Activated naive CD8-positive, alpha-beta T cell treated with anti-CD3 and anti-CD28 coated beads, Interleukin-2, amount 10 ng/mL, durations not matched to agents 7 days and 5 days (primary cell): ENCODE measurements at regions of chr10 and their contacts with region 1.

Region 1: GRCh38 chr10:5293691-5294550 is 70.8 kb upstream of the UCN3 start:
- DNase-seq: peak; percentile 80
- ATAC-seq: peak; percentile 56
- H3K4me3 Mint-ChIP-seq: peak overlapping the region; percentile 97
- H3K27ac Mint-ChIP-seq: peak overlapping the region; percentile 98
- H3K4me1 Mint-ChIP-seq: peaks cover 66% of the 10 kb centered on the region
- H3K27me3 Mint-ChIP-seq: no peaks in the 10 kb centered on the region

Region 2: DNA sequence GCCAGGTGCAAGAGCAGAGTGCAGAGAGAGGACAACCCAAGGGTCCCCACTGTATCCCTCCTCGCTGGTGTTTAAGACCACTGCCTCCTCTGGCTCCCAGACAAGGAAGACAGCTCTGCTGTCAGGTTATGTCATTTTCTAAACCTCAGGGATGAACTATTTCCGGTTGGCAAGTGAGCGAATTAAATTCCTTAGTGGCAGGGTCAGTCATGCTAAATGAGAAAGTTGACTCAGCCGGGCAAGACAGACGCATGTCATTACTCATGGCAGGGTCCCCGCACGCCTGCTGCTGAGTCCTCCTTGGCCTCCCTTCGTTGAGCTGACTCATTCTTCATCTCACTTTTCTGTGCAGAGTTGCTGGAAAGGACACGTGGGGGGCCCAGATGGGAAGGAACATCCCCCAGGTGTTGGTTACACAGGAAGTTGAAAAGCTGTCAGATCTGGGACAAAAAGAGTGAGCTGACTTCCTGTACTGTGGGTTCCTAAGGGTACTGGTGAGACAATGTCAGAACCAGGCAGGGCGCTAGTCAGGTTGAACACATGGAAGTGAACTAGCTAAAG is 23.7 kb after region 1 on chr10:
- POLR2A ChIA-PET with region 1: interaction called, 10 read pairs
- DNase-seq: peak; percentile 56
- ATAC-seq: peak; percentile 92
- H3K4me3 Mint-ChIP-seq: peak overlapping the region; percentile 53
- H3K27ac Mint-ChIP-seq: peak overlapping the region; percentile 70
- H3K4me1 Mint-ChIP-seq: peaks cover 47% of the 10 kb centered on the region
- H3K27me3 Mint-ChIP-seq: no peaks in the 10 kb centered on the region

Region 3: GRCh38 chr10:5329154-5329553 is 35.2 kb after region 1 on chr10:
- POLR2A ChIA-PET with region 1: no interaction called
- DNase-seq: no peak
- ATAC-seq: no peak
- H3K4me3 Mint-ChIP-seq: no peak overlapping the region
- H3K27ac Mint-ChIP-seq: no peak overlapping the region
- H3K4me1 Mint-ChIP-seq: no peaks in the 10 kb centered on the region
- H3K27me3 Mint-ChIP-seq: peaks cover 8% of the 10 kb centered on the region

Region 4: GRCh38 chr10:5364890-5365338 is 71.0 kb after region 1 on chr10 and contains the start of gene UCN3:
- POLR2A ChIA-PET with region 1: no interaction called
- DNase-seq: no peak
- ATAC-seq: no peak
- H3K4me3 Mint-ChIP-seq: no peak within 1 kb of the TSS
- H3K27ac Mint-ChIP-seq: no peak within 1 kb of the TSS
- H3K4me1 Mint-ChIP-seq: no peaks in the 10 kb centered on the region
- H3K27me3 Mint-ChIP-seq: peaks cover 16% of the 10 kb centered on the region
- total RNA-seq, gene UCN3: not detected

Region 5: GRCh38 chr10:5385224-5385623 is 91.3 kb after region 1 on chr10:
- POLR2A ChIA-PET with region 1: no interaction called
- DNase-seq: no peak
- ATAC-seq: no peak
- H3K4me3 Mint-ChIP-seq: no peak overlapping the region
- H3K27ac Mint-ChIP-seq: no peak overlapping the region
- H3K4me1 Mint-ChIP-seq: peaks cover 1% of the 10 kb centered on the region
- H3K27me3 Mint-ChIP-seq: no peaks in the 10 kb centered on the region